Heart right ventricle (tissue), 16 donors: ENCODE measurements at regions of chr3 and their contacts with region 1.

Region 1: DNA sequence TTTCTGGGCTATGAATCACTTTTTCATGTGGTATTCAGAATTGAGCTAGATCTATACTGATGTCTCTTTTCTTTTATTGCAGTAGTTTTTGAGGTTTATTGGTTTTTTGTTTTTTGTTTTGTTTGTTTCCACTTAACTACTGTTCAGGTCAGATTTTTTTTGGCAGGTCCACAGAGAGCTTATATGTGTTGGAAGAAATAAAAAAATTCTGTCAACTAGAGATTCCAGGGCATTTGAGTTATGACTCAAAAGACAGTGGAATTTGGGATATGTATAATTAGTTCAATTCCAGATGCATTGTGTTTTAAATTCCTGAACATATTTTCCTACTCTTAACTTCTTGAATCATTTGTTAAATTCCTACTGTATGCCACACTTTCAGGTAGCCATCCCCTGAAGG is 727.2 kb downstream of the SI start:
- DNase-seq: no peak
- ATAC-seq: no peak
- H3K4me3 ChIP-seq: no peak overlapping the region
- H3K27ac ChIP-seq: no peak overlapping the region
- H3K4me1 ChIP-seq: no peaks in the 10 kb centered on the region
- H3K27me3 ChIP-seq: no peaks in the 10 kb centered on the region
- CTCF ChIP-seq: no peak

Region 2: DNA sequence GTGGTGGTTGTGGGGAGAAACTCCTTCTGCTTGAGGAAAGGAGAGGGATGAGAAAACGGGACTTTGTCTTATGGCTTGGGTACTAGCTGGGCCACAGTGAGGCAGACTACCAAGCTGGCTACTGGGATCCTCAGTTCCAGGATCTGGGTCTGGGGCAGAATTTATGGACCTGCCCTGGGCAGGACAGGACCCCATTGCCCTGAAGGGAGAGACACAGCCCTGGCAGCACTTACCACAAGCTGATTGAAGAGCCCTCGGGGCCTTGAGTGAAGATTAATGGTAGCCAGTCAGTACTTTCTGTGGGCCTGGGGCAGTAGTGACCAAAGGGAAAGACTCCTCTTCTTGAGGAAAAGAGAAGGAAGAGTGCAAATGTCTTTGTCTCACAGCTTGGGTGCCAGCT is 72.6 kb before region 1 on chr3:
- intact Hi-C with region 1: loop called in 1 of 10 experiments (anchors 2 kb)
- DNase-seq: no peak
- ATAC-seq: no peak
- H3K4me3 ChIP-seq: no peak overlapping the region
- H3K27ac ChIP-seq: no peak overlapping the region
- H3K4me1 ChIP-seq: no peaks in the 10 kb centered on the region
- H3K27me3 ChIP-seq: no peaks in the 10 kb centered on the region
- CTCF ChIP-seq: no peak

Region 3: DNA sequence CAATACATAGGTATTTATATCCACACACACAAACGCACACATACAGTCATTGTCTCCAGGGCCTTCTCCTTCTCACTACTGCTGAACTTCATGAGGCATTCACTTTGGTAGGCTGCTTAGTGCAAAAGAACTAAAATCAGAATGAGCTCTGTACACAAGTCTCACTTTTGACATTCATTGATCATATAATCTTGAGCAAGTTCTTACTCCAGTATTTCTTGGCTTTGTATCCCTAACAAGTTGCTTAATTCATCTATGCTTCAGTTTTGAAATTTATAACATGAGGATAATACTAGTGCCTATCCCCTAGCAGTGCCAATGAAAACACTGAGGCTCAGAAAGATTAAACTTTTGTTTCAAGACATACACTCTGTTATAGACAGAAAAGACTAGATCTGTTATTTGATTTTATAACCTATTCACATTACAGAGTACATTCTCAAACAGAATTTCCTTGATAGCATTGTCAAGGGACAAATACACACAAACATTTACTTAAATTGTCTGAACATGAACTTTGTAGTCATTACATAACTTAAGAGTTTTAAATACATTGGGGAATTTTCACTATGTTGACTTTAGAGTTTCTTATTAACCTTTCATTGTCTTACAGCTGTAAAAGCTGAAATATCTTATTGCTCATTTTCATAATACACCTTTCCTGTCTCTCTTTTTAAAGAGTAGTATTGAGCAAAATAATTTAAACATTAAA is 782.2 kb after region 1 on chr3:
- intact Hi-C with region 1: no loop called
- DNase-seq: no peak
- ATAC-seq: no peak
- H3K4me3 ChIP-seq: no peak overlapping the region
- H3K27ac ChIP-seq: no peak overlapping the region
- H3K4me1 ChIP-seq: no peaks in the 10 kb centered on the region
- H3K27me3 ChIP-seq: no peaks in the 10 kb centered on the region
- CTCF ChIP-seq: no peak